Tibial artery (tissue), 4 donors: ENCODE measurements at regions of chr1 and their contacts with region 1.

Region 1: GRCh38 chr1:212857992-212858460 is at the start of gene FLVCR1:
- DNase-seq: peak; percentile 98
- H3K4me3 ChIP-seq: peak within 1 kb of the TSS; percentile 89 to 96
- H3K27ac ChIP-seq: peak within 1 kb of the TSS; percentile 88 to 89
- H3K4me1 ChIP-seq: peaks cover 0 to 27% (median 19%) of the 10 kb centered on the region in 4 donors
- H3K27me3 ChIP-seq: no peaks in the 10 kb centered on the region
- CTCF ChIP-seq: no peak

Region 2: DNA sequence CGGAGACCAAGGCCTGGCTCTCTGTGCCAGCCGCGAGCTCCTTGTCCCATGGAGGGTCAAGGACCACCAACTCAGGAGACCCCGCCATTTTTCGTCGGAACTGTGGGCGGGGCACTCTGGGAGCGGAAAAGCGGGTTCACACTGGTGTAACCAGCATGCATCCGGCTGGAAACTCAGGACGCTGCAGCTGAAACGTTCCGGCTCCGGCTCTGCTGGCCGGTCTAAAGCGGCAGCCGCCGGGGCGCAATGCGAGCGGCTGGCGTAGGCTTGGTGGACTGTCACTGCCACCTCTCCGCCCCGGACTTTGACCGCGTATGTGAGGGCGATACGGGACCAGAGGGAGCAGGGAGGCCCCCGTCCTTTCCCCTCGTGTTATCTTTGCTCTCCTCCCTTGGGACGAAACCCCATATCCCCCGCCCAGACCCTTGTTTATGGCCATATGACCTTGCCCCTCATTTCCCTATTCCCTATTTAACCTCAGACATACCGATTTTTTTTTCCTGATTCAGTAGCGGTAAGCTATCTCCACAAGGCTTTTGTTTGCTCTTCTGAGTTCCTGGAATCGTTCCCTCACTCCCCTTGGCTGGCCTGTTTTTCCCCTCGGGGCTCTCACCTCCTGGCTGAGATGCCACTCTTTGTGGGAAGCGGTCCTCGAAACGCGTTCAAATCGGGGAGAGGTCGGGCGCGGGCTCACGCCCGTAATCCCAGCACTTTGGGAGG is 66.2 kb before region 1 on chr1 and contains the starts of genes NSL1 and TATDN3:
- intact Hi-C with region 1: loop called (anchors 10 kb)
- DNase-seq: peak; percentile 79 to 92
- H3K4me3 ChIP-seq: peak within 1 kb of the TSS; percentile 74 to 95
- H3K27ac ChIP-seq: peak within 1 kb of the TSS; percentile 97 to 98
- H3K4me1 ChIP-seq: peaks cover 0 to 30% (median 14%) of the 10 kb centered on the region in 4 donors
- H3K27me3 ChIP-seq: no peaks in the 10 kb centered on the region
- CTCF ChIP-seq: no peak

Region 3: GRCh38 chr1:213015099-213016050 is 157.3 kb after region 1 on chr1 and contains the start of gene ANGEL2:
- intact Hi-C with region 1: loop called (anchors 10 kb)
- DNase-seq: peak; percentile 97 to 98
- H3K4me3 ChIP-seq: peak within 1 kb of the TSS; percentile 67 to 93
- H3K27ac ChIP-seq: peak within 1 kb of the TSS; percentile 88 to 92
- H3K4me1 ChIP-seq: peaks cover 0 to 19% (median 7%) of the 10 kb centered on the region in 4 donors
- H3K27me3 ChIP-seq: no peaks in the 10 kb centered on the region
- CTCF ChIP-seq: no peak